Activated CD4-positive, alpha-beta T cell treated with anti-CD3 and anti-CD28 coated beads for 36 hours (primary cell): ENCODE measurements at regions of chr4 and their contacts with region 1.

Region 1: GRCh38 chr4:90012918-90013317 is 114.3 kb upstream of the CCSER1 start:
- DNase-seq: no peak
- ATAC-seq: no peak
- H3K4me3 Mint-ChIP-seq: no peak overlapping the region
- H3K27ac Mint-ChIP-seq: no peak overlapping the region
- H3K4me1 Mint-ChIP-seq: no peaks in the 10 kb centered on the region
- H3K27me3 Mint-ChIP-seq: peaks cover 5% of the 10 kb centered on the region

Region 2: GRCh38 chr4:89586864-89587263 is 426.1 kb before region 1 on chr4:
- CTCF ChIA-PET with region 1: no interaction called
- POLR2A ChIA-PET with region 1: no interaction called
- intact Hi-C with region 1: loop called in 1 of 2 experiments (anchors 5 kb)
- DNase-seq: no peak
- ATAC-seq: no peak
- H3K4me3 Mint-ChIP-seq: no peak overlapping the region
- H3K27ac Mint-ChIP-seq: no peak overlapping the region
- H3K4me1 Mint-ChIP-seq: no peaks in the 10 kb centered on the region
- H3K27me3 Mint-ChIP-seq: peaks cover 2% of the 10 kb centered on the region

Region 3: GRCh38 chr4:89836897-89837384 is 176.0 kb before region 1 on chr4 and contains the start of gene SNCA:
- CTCF ChIA-PET with region 1: no interaction called
- POLR2A ChIA-PET with region 1: no interaction called
- intact Hi-C with region 1: no loop called
- DNase-seq: peak; percentile 76
- ATAC-seq: peak; percentile 70
- H3K4me3 Mint-ChIP-seq: peak within 1 kb of the TSS; percentile 70
- H3K27ac Mint-ChIP-seq: no peak within 1 kb of the TSS
- H3K4me1 Mint-ChIP-seq: peaks cover 16% of the 10 kb centered on the region
- H3K27me3 Mint-ChIP-seq: peaks cover 48% of the 10 kb centered on the region
- total RNA-seq, gene SNCA: 0.85 to 1.3 TPM

Region 4: DNA sequence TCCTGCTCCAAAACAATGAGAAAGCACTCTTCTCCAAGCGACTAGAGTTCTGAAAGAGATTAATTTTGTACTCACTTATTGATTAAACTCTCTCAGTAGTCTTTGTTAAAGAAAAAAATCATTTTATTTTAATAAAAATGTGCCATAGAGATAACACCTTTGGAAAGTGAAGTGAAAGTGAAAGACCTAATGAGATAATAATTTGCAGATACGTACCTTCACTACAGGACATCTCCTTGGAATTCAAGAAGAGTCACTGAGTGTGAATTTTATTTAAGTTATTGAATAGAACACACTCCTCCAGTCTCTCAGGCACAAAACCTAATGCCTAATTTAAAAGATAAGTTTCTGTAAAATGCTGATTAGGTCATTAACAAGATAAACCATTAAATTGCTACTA is 1220.2 kb after region 1 on chr4:
- CTCF ChIA-PET with region 1: no interaction called
- POLR2A ChIA-PET with region 1: no interaction called
- intact Hi-C with region 1: no loop called
- DNase-seq: no peak
- ATAC-seq: no peak
- H3K4me3 Mint-ChIP-seq: no peak overlapping the region
- H3K27ac Mint-ChIP-seq: no peak overlapping the region
- H3K4me1 Mint-ChIP-seq: no peaks in the 10 kb centered on the region
- H3K27me3 Mint-ChIP-seq: no peaks in the 10 kb centered on the region